Left colon (tissue), 2 donors: ENCODE measurements at regions of chr10 and their contacts with region 1.

Region 1: DNA sequence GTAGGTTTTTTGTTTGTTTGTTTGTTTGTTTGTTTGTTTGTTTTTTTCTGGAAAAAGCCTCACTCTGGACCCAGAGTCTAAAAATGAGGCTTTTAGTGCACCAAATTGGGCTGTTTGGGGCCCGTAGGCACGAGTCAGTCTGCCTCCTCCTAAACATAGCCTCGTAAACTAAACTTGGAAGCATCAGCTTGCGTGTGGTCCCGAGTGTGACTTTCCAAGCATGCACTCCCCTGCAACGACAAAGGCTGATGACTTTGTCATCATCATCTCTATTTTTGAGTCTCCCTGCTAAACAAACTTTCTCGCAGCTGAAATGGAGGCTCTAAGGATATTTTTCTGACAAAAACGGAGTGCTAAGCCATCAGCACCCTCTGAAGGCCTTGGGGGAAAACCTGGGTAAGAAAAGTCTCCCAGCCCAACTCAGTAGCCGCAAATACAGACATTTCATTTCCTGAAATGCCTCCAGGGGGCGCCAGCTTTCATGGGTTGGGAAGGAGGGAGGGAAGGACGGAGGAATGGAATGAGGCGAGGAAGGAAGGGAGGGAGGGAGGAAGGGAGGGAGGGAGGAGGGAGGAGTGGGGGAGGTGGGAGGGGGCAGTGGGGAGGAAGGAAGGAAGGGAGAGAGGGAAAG is 245.9 kb downstream of the KCNMA1 start:
- DNase-seq: peak; percentile 67 to 74
- ATAC-seq: peak; percentile 82

Region 2: DNA sequence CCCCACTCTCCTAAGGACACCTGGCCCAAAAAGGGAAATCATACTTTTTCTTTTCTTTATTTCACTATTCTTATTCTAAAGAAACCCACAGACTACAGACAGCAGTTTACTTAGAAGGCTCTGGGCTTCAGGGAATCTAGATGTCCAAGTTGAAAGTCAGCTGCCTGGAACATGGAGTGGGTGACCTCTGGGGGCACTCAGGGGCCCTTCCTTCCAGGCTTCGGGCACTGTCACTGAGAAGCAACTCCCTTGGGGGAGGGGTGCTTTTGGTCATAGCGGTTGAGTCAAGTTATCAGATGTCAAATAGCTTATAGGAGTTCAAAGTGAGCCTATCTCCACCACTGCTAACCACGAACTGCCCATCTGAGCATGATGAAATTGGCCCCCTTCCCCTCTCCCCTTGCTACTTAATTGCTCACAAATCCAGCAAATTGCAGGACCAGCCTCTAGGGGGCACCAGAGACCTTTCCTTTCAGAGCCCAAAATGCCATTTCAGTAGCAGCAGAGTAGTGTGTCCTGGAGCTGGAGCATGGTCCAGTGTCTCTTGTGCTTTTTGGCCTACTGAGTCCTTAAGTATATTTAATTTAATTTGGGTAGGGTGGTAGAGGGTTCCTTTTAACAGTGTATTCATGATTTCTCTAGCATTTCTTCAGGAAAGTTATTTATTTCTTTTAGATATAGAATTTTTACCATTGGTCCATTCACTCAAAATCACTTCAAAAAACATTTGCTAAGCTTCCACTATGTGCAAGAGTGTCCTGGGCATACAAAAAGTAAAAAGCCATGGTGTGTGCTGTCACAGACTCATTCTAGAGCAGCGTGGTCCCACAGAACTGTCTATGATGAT is 217.9 kb before region 1 on chr10:
- intact Hi-C with region 1: loop called in 1 of 2 experiments (anchors 5 kb)
- DNase-seq: peak in 1 of 2 donors; percentile 75
- ATAC-seq: peak; percentile 73

Region 3: GRCh38 chr10:77230194-77230593 is 161.5 kb before region 1 on chr10:
- intact Hi-C with region 1: no loop called
- DNase-seq: no peak
- ATAC-seq: no peak